ENCODE measurements at regions of chr9 and their contacts with region 1.

Region 1: GRCh38 chr9:84170521-84171141 is 169.9 kb downstream of the SLC28A3 start:
- DNase-seq: no peak
- ATAC-seq: no peak
- H3K4me3 Mint-ChIP-seq: no peak overlapping the region
- H3K27ac Mint-ChIP-seq: no peak overlapping the region
- H3K4me1 Mint-ChIP-seq: no peaks in the 10 kb centered on the region
- H3K27me3 Mint-ChIP-seq: no peaks in the 10 kb centered on the region

Region 2: DNA sequence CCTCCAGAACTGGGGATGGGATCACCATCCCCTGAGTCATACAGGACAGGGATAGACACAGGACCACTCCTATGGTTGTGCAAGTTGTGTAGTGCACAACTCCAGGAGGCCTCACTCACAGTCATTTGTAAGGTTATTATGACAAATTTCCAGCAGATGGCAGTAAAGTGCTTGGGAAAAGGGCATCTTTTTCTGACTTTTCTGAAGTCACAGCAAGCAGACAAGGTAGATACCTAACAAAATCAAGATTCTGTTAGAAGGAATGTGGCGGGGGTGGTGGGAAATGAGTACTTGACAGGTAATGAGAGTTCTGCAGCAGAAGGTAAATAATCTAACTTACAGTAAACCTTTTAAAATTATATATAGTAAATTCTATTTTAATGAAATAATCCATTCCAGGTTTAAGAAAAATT is 232.7 kb before region 1 on chr9:
- CTCF ChIA-PET with region 1: interaction called, 4 read pairs
- POLR2A ChIA-PET with region 1: no interaction called
- intact Hi-C with region 1: loop called (anchors 1 kb)
- DNase-seq: peak; percentile 23
- ATAC-seq: peak; percentile 63
- H3K4me3 Mint-ChIP-seq: no peak overlapping the region
- H3K27ac Mint-ChIP-seq: no peak overlapping the region
- H3K4me1 Mint-ChIP-seq: no peaks in the 10 kb centered on the region
- H3K27me3 Mint-ChIP-seq: no peaks in the 10 kb centered on the region

Region 3: GRCh38 chr9:84187090-84187489 is 16.5 kb after region 1 on chr9:
- CTCF ChIA-PET with region 1: interaction called, 18 read pairs
- POLR2A ChIA-PET with region 1: no interaction called
- intact Hi-C with region 1: no loop called
- DNase-seq: no peak
- ATAC-seq: no peak
- H3K4me3 Mint-ChIP-seq: no peak overlapping the region
- H3K27ac Mint-ChIP-seq: no peak overlapping the region
- H3K4me1 Mint-ChIP-seq: no peaks in the 10 kb centered on the region
- H3K27me3 Mint-ChIP-seq: peaks cover 8% of the 10 kb centered on the region

Measured in activated CD4-positive, alpha-beta T cell treated with anti-CD3 and anti-CD28 coated beads for 36 hours (primary cell).